IMR-90 (cell line): ENCODE measurements at regions of chr1 and their contacts with region 1.

Region 1: DNA sequence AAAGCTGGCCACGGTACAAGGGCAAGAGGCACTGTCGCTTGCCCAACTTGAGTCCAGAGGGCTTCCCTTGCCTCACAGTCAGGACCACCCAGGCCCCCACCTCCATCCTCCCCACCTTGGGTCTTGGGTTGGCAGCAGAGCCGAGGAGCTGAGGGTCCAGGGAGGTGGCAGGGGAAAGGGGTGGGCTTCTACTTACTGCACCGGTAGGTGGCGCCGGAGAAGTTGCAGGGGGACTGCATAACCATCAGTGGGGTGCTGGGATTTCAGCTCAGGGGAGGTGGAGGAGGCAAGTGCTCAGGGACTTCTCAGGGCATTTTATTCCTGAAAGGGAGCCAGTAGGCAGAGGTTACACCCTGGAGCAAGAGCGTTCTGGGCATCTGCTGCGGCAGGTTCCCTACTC is 44.0 kb downstream of the TRIM62 start:
- DNase-seq: peak; percentile 27
- ATAC-seq: peak; percentile 51; the same call in 1 of the 2 replicates
- H3K4me3 ChIP-seq: no peak overlapping the region
- H3K27ac ChIP-seq: no peak overlapping the region
- H3K4me1 ChIP-seq: peaks cover 10% of the 10 kb centered on the region
- H3K27me3 ChIP-seq: no peaks in the 10 kb centered on the region
- CTCF ChIP-seq: peak; percentile 49
- POLR2A ChIP-seq: no peak
- RAD21 ChIP-seq: peak; percentile 42

Region 2: DNA sequence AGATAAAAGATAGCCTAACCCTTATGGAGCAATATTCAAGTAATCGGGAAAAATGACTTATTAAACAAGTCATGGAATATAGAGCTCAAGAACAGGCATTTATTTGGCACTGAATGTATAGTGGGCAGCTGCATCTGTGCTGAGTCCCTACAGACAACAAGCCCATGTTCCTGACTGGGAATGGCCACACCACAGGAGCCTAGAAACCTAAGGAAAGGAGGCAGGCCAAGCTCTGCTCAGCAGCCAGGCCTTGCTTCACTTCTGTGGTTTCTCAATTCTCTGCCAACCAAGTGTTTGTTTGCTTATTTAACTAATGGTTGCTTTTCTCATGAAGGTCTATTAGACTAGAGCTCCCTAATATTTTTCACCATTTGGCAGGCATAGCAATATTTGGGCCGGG is 122.6 kb before region 1 on chr1:
- CTCF ChIA-PET with region 1: no interaction called
- POLR2A ChIA-PET with region 1: no interaction called
- dilution Hi-C with region 1: no loop called
- in situ Hi-C with region 1: no loop called
- intact Hi-C with region 1: no loop called
- DNase-seq: no peak
- ATAC-seq: peak; percentile 67; the same call in 1 of the 2 replicates
- H3K4me3 ChIP-seq: no peak overlapping the region
- H3K27ac ChIP-seq: no peak overlapping the region
- H3K4me1 ChIP-seq: peaks cover 3% of the 10 kb centered on the region; the same call in 1 of the 2 replicates
- H3K27me3 ChIP-seq: no peaks in the 10 kb centered on the region
- CTCF ChIP-seq: no peak
- POLR2A ChIP-seq: no peak
- RAD21 ChIP-seq: no peak

Region 3: GRCh38 chr1:33188572-33189275 is 50.9 kb after region 1 on chr1:
- CTCF ChIA-PET with region 1: no interaction called
- POLR2A ChIA-PET with region 1: no interaction called
- dilution Hi-C with region 1: no loop called
- in situ Hi-C with region 1: loop called (anchors 5 kb)
- intact Hi-C with region 1: no loop called
- DNase-seq: peak; percentile 42
- ATAC-seq: peak; percentile 49; the same call in 1 of the 2 replicates
- H3K4me3 ChIP-seq: no peak overlapping the region
- H3K27ac ChIP-seq: no peak overlapping the region
- H3K4me1 ChIP-seq: peaks cover 5% of the 10 kb centered on the region; the same call in 1 of the 2 replicates
- H3K27me3 ChIP-seq: peaks cover 3% of the 10 kb centered on the region
- CTCF ChIP-seq: no peak
- POLR2A ChIP-seq: no peak
- RAD21 ChIP-seq: no peak

Region 4: DNA sequence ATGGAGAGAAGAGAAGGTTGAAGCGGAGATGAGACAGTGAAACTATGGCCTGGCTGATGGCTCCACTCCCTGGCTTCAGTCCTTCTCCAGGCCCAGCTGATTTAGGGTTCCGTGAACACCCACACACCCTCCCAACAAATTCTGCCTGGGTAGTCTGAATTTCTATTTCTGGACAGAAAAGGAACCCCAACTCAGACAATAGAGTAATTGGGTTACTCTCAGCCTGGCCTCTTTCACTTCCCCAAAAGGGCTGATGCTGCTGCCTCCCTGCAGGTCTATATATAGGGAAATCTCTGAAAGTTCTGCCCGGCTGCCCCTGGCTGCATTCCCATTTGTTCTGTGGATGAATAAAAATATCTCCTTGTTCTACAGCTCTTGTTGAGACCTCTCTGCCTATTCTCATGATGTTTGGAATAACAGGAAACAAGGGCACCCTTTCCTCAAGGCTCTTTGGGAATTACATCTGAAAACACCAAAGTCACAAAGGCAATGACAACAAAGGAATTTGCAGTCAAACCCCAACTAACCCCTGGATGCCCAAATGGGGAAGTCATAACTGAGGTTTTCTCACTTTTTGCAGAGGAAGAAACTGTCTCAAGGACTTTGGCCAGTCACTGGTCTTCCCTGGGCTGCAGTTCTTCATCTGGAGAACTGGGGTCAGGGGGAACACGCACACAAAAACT is 323.3 kb after region 1 on chr1:
- CTCF ChIA-PET with region 1: no interaction called
- POLR2A ChIA-PET with region 1: no interaction called
- dilution Hi-C with region 1: no loop called
- in situ Hi-C with region 1: loop called (anchors 10 kb)
- intact Hi-C with region 1: no loop called
- DNase-seq: no peak
- ATAC-seq: no peak
- H3K4me3 ChIP-seq: no peak overlapping the region
- H3K27ac ChIP-seq: no peak overlapping the region
- H3K4me1 ChIP-seq: peaks cover 11% of the 10 kb centered on the region
- H3K27me3 ChIP-seq: no peaks in the 10 kb centered on the region
- CTCF ChIP-seq: no peak
- POLR2A ChIP-seq: no peak
- RAD21 ChIP-seq: no peak

Region 5: DNA sequence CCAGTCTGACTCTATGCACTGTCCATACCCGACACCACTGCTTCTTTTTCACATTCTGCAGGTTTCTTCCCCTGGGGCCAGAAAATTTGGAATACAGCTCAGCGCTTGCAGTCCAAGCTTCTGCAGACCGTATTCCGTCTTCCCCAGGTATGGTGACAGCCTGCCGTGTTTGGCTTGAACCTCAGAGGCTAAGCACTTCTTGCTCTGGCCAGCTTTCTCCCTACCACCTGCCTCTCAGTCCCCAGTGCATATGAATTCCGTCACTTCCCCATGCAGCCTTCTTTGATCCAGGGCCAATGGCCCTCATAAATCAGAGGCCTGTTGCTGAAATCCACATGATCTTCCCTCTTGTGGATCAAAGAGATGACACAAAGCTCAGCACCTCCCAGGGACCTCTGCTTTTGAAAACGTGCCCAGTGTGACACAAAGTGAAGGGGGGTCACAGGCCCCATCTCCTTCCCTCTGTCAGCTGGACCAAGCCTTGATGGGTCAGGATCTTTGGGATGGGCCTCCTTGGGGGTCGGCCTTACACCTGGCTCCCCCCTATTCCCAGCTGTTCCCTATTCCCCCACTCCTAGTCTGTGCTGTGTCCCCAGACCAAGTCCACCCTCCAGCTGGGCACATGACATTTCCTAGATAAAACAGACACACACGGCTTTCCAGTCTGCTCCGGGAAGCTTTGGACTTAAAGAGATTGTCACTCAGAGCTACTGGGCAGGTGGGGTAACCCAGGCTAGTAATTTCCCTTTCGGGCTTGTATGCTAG is 792.7 kb after region 1 on chr1:
- CTCF ChIA-PET with region 1: no interaction called
- POLR2A ChIA-PET with region 1: no interaction called
- dilution Hi-C with region 1: no loop called
- in situ Hi-C with region 1: no loop called
- intact Hi-C with region 1: no loop called
- DNase-seq: no peak
- ATAC-seq: no peak
- H3K4me3 ChIP-seq: no peak overlapping the region
- H3K27ac ChIP-seq: no peak overlapping the region
- H3K4me1 ChIP-seq: no peaks in the 10 kb centered on the region
- H3K27me3 ChIP-seq: no peaks in the 10 kb centered on the region
- CTCF ChIP-seq: no peak
- POLR2A ChIP-seq: no peak
- RAD21 ChIP-seq: no peak